AG04450 (cell line): ENCODE measurements at regions of chr3 and their contacts with region 1.

Region 1: DNA sequence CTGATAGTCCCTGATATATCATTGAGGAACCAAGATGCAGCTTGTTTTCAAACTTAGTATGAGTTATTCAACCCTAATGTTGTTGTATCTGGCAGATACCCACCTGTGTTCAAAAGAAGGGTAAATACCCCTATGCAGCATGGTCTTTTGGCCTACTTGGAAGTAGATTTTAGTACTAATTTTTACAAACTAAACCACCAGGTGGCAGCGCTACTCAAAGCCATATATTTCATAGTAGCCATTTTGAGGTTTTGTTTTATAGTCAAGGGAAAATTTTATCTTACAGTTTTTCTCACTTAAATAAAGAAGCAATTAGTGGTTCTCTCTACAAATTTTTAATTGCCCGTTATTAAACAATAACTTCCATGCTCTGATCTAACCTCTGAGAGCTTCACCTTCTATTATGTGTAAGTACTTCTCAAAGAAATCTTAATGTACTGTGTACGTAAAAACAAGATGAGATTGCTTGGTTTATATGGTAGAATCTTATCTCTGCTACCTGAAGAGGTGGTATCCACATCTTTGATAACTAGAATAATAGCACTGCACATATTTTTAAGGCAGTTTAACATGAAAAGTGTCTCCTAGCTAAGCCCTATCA is 31.5 kb upstream of the MLF1 start:
- DNase-seq: peak; percentile 16
- H3K4me3 ChIP-seq: no peak overlapping the region
- H3K27ac ChIP-seq: no peak overlapping the region
- H3K27me3 ChIP-seq: no peaks in the 10 kb centered on the region
- CTCF ChIP-seq: peak; percentile 60

Region 2: GRCh38 chr3:158520433-158520832 is 19.1 kb before region 1 on chr3:
- CTCF ChIA-PET with region 1: no interaction called
- POLR2A ChIA-PET with region 1: no interaction called
- DNase-seq: no peak
- H3K4me3 ChIP-seq: no peak overlapping the region
- H3K27ac ChIP-seq: no peak overlapping the region
- H3K27me3 ChIP-seq: no peaks in the 10 kb centered on the region
- CTCF ChIP-seq: no peak

Region 3: GRCh38 chr3:158570999-158571974 is 31.8 kb after region 1 on chr3 and contains the start of gene MLF1:
- CTCF ChIA-PET with region 1: interaction called, 23 read pairs
- POLR2A ChIA-PET with region 1: no interaction called
- DNase-seq: peak; percentile 80
- H3K4me3 ChIP-seq: peak within 1 kb of the TSS; percentile 73
- H3K27ac ChIP-seq: peak within 1 kb of the TSS; percentile 41
- H3K27me3 ChIP-seq: no peaks in the 10 kb centered on the region
- CTCF ChIP-seq: no peak
- polyA plus RNA-seq, gene MLF1: 6.7 and 10.1 TPM in 2 replicates

Region 4: GRCh38 chr3:158644345-158644908 is 104.9 kb after region 1 on chr3 and contains the start of gene GFM1:
- CTCF ChIA-PET with region 1: interaction called, 44 read pairs
- POLR2A ChIA-PET with region 1: interaction called, 5 read pairs
- DNase-seq: peak; percentile 86
- H3K4me3 ChIP-seq: peak within 1 kb of the TSS; percentile 92
- H3K27ac ChIP-seq: peak within 1 kb of the TSS; percentile 87
- H3K27me3 ChIP-seq: no peaks in the 10 kb centered on the region
- CTCF ChIP-seq: peak; percentile 94
- polyA plus RNA-seq, gene GFM1: 18.9 and 22.2 TPM in 2 replicates

Region 5: GRCh38 chr3:158801696-158802408 is 262.3 kb after region 1 on chr3 and contains the start of gene MFSD1:
- CTCF ChIA-PET with region 1: interaction called, 11 read pairs
- POLR2A ChIA-PET with region 1: no interaction called
- DNase-seq: peak; percentile 67
- H3K4me3 ChIP-seq: peak within 1 kb of the TSS; percentile 79
- H3K27ac ChIP-seq: peak within 1 kb of the TSS; percentile 74
- H3K27me3 ChIP-seq: no peaks in the 10 kb centered on the region
- CTCF ChIP-seq: no peak
- polyA plus RNA-seq, gene MFSD1: 69.6 and 89.9 TPM in 2 replicates